ENCODE measurements at regions of chr17 and their contacts with region 1.

Region 1: GRCh38 chr17:48024937-48025906 is 12.4 kb downstream of the COPZ2 start:
- DNase-seq: peak; percentile 91 to 99
- H3K4me3 ChIP-seq: peak overlapping the region; percentile 30 to 65 (median 50); a peak in 7 of 8 replicates
- H3K27ac ChIP-seq: no peak overlapping the region
- H3K4me1 ChIP-seq: peaks cover 0 to 21% (median 11%) of the 10 kb centered on the region in 4 experiments; a peak in 5 of 7 replicates
- H3K27me3 ChIP-seq: peaks cover 2 to 23% (median 17%) of the 10 kb centered on the region in 4 experiments
- CTCF ChIP-seq: peak; percentile 81 to 87 (median 83)
- EP300 ChIP-seq: no peak
- POLR2A ChIP-seq: no peak
- RAD21 ChIP-seq: peak; percentile 96

Region 2: GRCh38 chr17:48011405-48012150 is 13.6 kb before region 1 on chr17:
- CTCF ChIA-PET with region 1: interaction called, 288 read pairs
- POLR2A ChIA-PET with region 1: interaction called, 4 read pairs
- DNase-seq: peak in 1 of 2 experiments; percentile 72
- H3K4me3 ChIP-seq: peak overlapping the region; percentile 61 to 75 (median 66)
- H3K27ac ChIP-seq: no peak overlapping the region
- H3K4me1 ChIP-seq: peaks cover 4 to 14% (median 9%) of the 10 kb centered on the region in 4 experiments
- H3K27me3 ChIP-seq: peaks cover 0 to 13% (median 8%) of the 10 kb centered on the region in 4 experiments; a peak in 6 of 7 replicates
- CTCF ChIP-seq: peak; percentile 40 to 66 (median 63)
- EP300 ChIP-seq: no peak
- POLR2A ChIP-seq: no peak
- RAD21 ChIP-seq: peak; percentile 45 to 60; a peak in 3 of 4 replicates

Region 3: GRCh38 chr17:48047741-48048383 is 22.6 kb after region 1 on chr17 and contains the start of gene NFE2L1:
- CTCF ChIA-PET with region 1: interaction called, 111 read pairs
- POLR2A ChIA-PET with region 1: interaction called, 1,227 read pairs
- DNase-seq: peak; percentile 96
- H3K4me3 ChIP-seq: peak within 1 kb of the TSS; percentile 85 to 95 (median 89)
- H3K27ac ChIP-seq: peak within 1 kb of the TSS; percentile 97
- H3K4me1 ChIP-seq: peaks cover 8 to 29% (median 23%) of the 10 kb centered on the region in 4 experiments; a peak in 6 of 7 replicates
- H3K27me3 ChIP-seq: no peaks in the 10 kb centered on the region
- CTCF ChIP-seq: no peak
- EP300 ChIP-seq: no peak
- POLR2A ChIP-seq: peak; percentile 69 to 95
- RAD21 ChIP-seq: no peak
- total RNA-seq, gene NFE2L1: 140 and 148 TPM in 2 replicates

Region 4: GRCh38 chr17:48062273-48062672 is 37.1 kb after region 1 on chr17:
- CTCF ChIA-PET with region 1: interaction called, 93 read pairs
- POLR2A ChIA-PET with region 1: interaction called, 1,227 read pairs
- DNase-seq: no peak
- H3K4me3 ChIP-seq: no peak overlapping the region
- H3K27ac ChIP-seq: no peak overlapping the region
- H3K4me1 ChIP-seq: peaks cover 0 to 4% (median 2%) of the 10 kb centered on the region in 4 experiments; a peak in 3 of 7 replicates
- H3K27me3 ChIP-seq: no peaks in the 10 kb centered on the region
- CTCF ChIP-seq: no peak
- EP300 ChIP-seq: no peak
- POLR2A ChIP-seq: no peak
- RAD21 ChIP-seq: no peak

Region 5: DNA sequence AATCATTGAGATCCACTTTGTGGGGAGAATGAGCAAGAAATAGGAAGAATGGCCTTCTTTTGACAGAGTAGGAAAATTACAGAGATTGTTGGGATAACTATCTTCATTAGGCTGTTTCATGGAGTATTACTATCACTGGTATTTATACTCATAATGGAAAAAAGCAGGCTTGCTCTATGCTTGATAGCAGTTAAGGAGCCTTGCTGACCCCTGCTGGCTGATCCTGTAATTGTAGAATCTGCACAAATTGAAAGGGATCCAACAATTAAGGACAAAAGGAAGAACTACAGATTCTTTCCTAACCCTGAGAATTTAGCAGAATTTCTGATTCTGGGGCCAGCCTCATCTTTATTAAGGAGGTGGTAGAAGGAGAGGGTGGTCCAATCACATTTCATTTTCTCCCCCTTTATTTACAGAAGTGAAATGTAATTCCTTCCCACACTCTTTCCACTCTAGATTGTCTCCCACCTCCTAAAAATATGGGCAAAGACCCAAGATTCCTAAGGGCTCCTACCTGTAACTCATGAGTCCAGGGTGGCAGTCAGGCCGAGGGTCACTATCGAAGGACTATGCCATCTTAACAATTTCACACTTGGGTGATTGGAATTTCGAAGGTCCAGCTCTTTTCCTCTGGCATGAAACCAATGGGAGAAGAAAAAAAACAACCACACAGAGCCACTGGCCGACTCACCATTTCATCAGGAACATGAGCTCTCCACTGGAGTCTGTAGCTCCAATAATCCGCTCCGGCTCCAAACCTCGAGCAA is 49.3 kb after region 1 on chr17:
- CTCF ChIA-PET with region 1: interaction called, 181 read pairs
- POLR2A ChIA-PET with region 1: interaction called, 1,227 read pairs
- DNase-seq: peak in 1 of 2 experiments; percentile 83
- H3K4me3 ChIP-seq: no peak overlapping the region
- H3K27ac ChIP-seq: no peak overlapping the region
- H3K4me1 ChIP-seq: no peaks in the 10 kb centered on the region
- H3K27me3 ChIP-seq: no peaks in the 10 kb centered on the region
- CTCF ChIP-seq: peak in 2 of 3 experiments; percentile 75 to 77; a peak in 3 of 4 replicates
- EP300 ChIP-seq: no peak
- POLR2A ChIP-seq: no peak
- RAD21 ChIP-seq: peak; percentile 67 to 75

Region 6: GRCh38 chr17:48131216-48131824 is 106.1 kb after region 1 on chr17:
- CTCF ChIA-PET with region 1: interaction called, 69 read pairs
- POLR2A ChIA-PET with region 1: interaction called, 3 read pairs
- DNase-seq: peak; percentile 15 to 68
- H3K4me3 ChIP-seq: no peak overlapping the region
- H3K27ac ChIP-seq: no peak overlapping the region
- H3K4me1 ChIP-seq: no peaks in the 10 kb centered on the region
- H3K27me3 ChIP-seq: no peaks in the 10 kb centered on the region
- CTCF ChIP-seq: peak; percentile 6 to 87 (median 87)
- EP300 ChIP-seq: no peak
- POLR2A ChIP-seq: no peak
- RAD21 ChIP-seq: peak; percentile 89 to 91

Region 7: GRCh38 chr17:48198950-48199541 is 173.8 kb after region 1 on chr17:
- CTCF ChIA-PET with region 1: no interaction called
- POLR2A ChIA-PET with region 1: no interaction called
- DNase-seq: no peak
- H3K4me3 ChIP-seq: no peak overlapping the region
- H3K27ac ChIP-seq: no peak overlapping the region
- H3K4me1 ChIP-seq: no peaks in the 10 kb centered on the region
- H3K27me3 ChIP-seq: no peaks in the 10 kb centered on the region; a peak in 1 of 7 replicates
- CTCF ChIP-seq: no peak
- EP300 ChIP-seq: no peak
- POLR2A ChIP-seq: no peak
- RAD21 ChIP-seq: no peak

Region 8: DNA sequence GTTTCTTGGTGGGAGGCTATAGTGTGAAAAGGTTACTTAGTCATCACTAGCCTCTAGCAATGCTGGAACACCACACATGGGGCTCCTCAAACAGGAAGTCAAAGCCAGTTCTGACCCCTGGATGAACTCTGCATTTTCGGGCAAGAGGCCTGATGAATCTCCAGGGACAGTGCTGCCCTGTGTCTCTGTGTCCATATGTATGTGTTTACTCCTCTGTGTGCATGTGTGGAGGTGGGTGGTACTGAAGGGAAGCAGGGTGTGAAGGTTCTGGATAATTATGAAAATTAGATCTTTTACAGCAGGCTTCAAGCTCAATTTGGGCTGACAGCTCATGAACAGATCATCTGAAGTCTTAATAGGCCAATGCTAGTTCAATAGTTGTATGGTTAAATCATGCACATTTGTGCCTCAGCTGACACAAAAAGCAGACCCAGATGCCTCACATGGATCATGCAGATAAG is 215.9 kb after region 1 on chr17:
- CTCF ChIA-PET with region 1: no interaction called
- POLR2A ChIA-PET with region 1: no interaction called
- DNase-seq: no peak
- H3K4me3 ChIP-seq: no peak overlapping the region
- H3K27ac ChIP-seq: no peak overlapping the region
- H3K4me1 ChIP-seq: peaks cover 0 to 8% (median 2%) of the 10 kb centered on the region in 4 experiments; a peak in 2 of 7 replicates
- H3K27me3 ChIP-seq: no peaks in the 10 kb centered on the region
- CTCF ChIP-seq: no peak
- EP300 ChIP-seq: no peak
- POLR2A ChIP-seq: no peak
- RAD21 ChIP-seq: no peak

Region 9: DNA sequence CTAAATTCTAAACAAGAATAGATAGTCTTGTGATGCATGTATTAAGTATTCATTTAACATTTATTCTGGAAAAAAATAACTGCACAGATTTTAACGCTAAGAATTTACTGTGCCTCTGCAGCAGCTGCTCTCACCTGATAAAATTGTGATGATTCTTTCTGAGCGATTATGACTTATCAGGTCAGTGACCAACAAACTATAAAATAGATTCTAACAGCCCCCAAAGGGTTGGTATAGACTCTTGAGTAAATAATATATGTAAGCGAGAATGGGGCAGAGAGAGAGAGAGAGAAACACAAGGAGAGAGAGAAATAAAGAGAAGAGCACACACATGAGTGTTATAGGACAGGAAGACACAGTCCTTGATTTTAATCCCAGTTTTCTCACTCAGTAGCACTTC is 226.7 kb after region 1 on chr17:
- CTCF ChIA-PET with region 1: no interaction called
- POLR2A ChIA-PET with region 1: no interaction called
- DNase-seq: no peak
- H3K4me3 ChIP-seq: no peak overlapping the region
- H3K27ac ChIP-seq: no peak overlapping the region
- H3K4me1 ChIP-seq: peaks cover 0 to 4% (median 0%) of the 10 kb centered on the region in 4 experiments; a peak in 1 of 7 replicates
- H3K27me3 ChIP-seq: no peaks in the 10 kb centered on the region; a peak in 1 of 7 replicates
- CTCF ChIP-seq: no peak
- EP300 ChIP-seq: no peak
- POLR2A ChIP-seq: no peak
- RAD21 ChIP-seq: no peak

Measured in H1 (cell line).